ENCODE measurements at regions of chr6 and their contacts with region 1.

Region 1: DNA sequence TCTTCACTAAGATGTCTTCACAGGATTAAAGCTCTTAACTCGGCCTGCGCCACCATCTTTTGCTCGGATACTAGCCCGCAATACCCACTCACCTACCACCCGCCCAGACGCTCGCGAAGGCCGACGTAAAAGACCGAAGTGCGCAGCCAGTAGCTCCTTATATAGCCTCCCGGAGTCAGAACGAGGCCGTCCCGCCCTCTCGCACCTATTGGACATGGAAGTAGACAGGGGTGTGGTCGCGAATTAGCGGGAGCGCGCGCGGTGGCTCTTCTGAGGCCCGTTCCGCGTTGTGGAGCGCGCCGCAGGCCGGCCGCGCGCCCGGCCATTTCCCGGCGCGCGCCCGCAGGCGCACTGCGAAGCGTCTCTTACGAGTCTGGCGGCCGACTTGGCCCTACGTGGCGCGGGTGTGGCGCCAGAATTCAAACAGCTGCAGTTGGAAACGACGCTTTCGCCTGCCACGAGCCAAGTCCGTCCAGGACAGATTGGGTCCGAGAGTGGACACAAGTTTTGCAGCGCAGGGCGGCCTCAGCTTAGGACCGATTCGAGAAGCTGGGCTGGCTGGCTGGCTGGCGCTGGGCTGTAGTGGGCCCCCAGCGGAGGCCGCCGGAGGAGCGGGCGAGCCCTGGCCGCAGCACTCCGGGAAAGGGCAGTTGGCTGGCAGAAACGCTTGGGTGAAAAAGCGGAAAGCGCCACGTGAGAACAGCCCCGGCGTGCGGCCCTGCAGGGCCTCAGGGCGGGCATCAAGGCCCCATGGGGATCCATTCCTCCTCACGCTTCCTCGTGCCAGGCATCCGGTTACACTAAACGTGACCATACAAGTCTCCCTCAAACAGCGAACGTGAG is 36.1 kb upstream of the SYNCRIP start:
- DNase-seq: peak; percentile 98
- H3K4me3 Mint-ChIP-seq: peak overlapping the region; percentile 97
- H3K27ac Mint-ChIP-seq: peak overlapping the region; percentile 98
- H3K4me1 Mint-ChIP-seq: peaks cover 25% of the 10 kb centered on the region
- H3K27me3 Mint-ChIP-seq: no peaks in the 10 kb centered on the region
- CTCF ChIP-seq: no peak

Region 2: GRCh38 chr6:85354761-85355618 is 323.8 kb before region 1 on chr6:
- CTCF ChIA-PET with region 1: no interaction called
- POLR2A ChIA-PET with region 1: no interaction called
- intact Hi-C with region 1: loop called (anchors 5 kb)
- DNase-seq: peak; percentile 73
- H3K4me3 Mint-ChIP-seq: no peak overlapping the region
- H3K27ac Mint-ChIP-seq: no peak overlapping the region
- H3K4me1 Mint-ChIP-seq: peaks cover 9% of the 10 kb centered on the region
- H3K27me3 Mint-ChIP-seq: no peaks in the 10 kb centered on the region
- CTCF ChIP-seq: peak; percentile 96

Region 3: DNA sequence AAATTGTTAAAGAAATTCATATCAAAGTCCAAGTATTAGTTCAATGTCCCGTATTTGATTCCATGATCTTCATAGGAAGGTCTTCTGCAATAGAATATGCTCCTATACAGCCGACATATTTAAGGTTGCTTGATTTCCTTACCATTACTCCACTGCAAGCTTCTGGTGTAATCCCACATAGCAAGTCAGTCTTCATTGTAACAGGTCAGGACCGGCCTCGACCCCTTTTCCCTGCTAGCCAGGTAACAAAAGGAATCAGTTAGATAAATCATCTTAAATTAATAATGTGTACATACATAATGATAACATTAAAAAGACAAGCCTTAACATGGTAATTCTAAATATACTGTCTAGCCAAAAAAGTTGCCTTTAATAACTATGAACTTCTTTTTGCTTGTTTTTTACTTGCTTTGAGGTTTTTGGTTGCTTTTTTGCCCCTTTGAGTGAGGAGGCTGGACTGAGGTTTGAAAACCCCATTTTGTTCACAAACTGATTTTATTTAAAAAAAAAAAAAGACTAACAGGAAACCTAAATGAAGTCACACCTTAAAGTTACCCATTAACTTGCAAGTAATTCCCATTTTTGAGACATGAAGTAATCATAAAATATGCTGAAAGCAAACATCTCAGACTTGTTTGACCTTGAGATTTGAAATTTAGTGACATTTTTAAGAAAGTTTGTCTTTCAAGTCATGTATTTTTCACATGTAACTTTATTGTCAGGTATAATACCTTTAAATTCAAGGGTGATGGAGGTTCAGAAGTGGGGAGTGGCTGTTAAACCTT is 65.9 kb before region 1 on chr6:
- CTCF ChIA-PET with region 1: no interaction called
- POLR2A ChIA-PET with region 1: interaction called, 18 read pairs
- intact Hi-C with region 1: no loop called
- DNase-seq: no peak
- H3K4me3 Mint-ChIP-seq: no peak overlapping the region
- H3K27ac Mint-ChIP-seq: no peak overlapping the region
- H3K4me1 Mint-ChIP-seq: no peaks in the 10 kb centered on the region
- H3K27me3 Mint-ChIP-seq: no peaks in the 10 kb centered on the region
- CTCF ChIP-seq: no peak

Region 4: GRCh38 chr6:85642774-85643536 is 35.9 kb before region 1 on chr6 and contains the start of gene SYNCRIP:
- CTCF ChIA-PET with region 1: interaction called, 69 read pairs
- POLR2A ChIA-PET with region 1: interaction called, 889 read pairs
- intact Hi-C with region 1: loop called (anchors 1 kb)
- DNase-seq: peak; percentile 99
- H3K4me3 Mint-ChIP-seq: peak within 1 kb of the TSS; percentile 87
- H3K27ac Mint-ChIP-seq: peak within 1 kb of the TSS; percentile 99
- H3K4me1 Mint-ChIP-seq: peaks cover 38% of the 10 kb centered on the region
- H3K27me3 Mint-ChIP-seq: no peaks in the 10 kb centered on the region
- CTCF ChIP-seq: no peak
- total RNA-seq, gene SYNCRIP: 126 and 161 TPM in 2 replicates

Region 5: DNA sequence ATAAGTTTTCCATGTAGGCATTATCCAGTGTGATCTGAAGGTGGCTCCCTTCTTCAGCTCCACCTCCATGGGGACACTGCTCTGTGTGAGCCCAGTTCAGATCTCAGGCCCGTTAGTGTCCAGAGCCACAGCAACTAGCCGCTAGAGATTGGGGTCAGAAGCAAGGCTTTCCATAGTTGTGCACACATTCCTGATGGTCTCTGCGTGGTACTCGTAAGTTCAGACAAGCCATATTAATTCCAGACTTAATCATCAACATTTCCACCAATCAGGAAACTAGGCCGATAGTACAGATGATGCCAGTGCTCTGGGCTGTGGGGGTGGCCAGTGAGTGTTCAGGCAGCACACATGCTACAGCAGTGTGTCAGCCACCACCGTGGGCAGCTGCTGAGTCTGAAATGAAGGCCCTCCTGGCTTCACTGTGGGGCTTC is 18.6 kb before region 1 on chr6:
- CTCF ChIA-PET with region 1: interaction called, 6 read pairs
- POLR2A ChIA-PET with region 1: interaction called, 45 read pairs
- intact Hi-C with region 1: no loop called
- DNase-seq: peak; percentile 81
- H3K4me3 Mint-ChIP-seq: no peak overlapping the region
- H3K27ac Mint-ChIP-seq: peak overlapping the region; percentile 13
- H3K4me1 Mint-ChIP-seq: peaks cover 6% of the 10 kb centered on the region
- H3K27me3 Mint-ChIP-seq: no peaks in the 10 kb centered on the region
- CTCF ChIP-seq: no peak

Measured in MCF 10A (cell line).